ENCODE measurements at regions of chr21 and their contacts with region 1.

Region 1: GRCh38 chr21:42652527-42653230 is 742 bp upstream of the PDE9A start:
- DNase-seq: peak; percentile 58
- ATAC-seq: peak; percentile 91
- H3K4me3 ChIP-seq: peak overlapping the region in 1 of 3 experiments; percentile 38; a peak in 2 of 6 replicates
- H3K27ac ChIP-seq: no peak overlapping the region
- H3K4me1 ChIP-seq: peaks cover 43% of the 10 kb centered on the region
- H3K27me3 ChIP-seq: peaks cover 4 to 29% of the 10 kb centered on the region in 2 experiments; a peak in 4 of 5 replicates
- CTCF ChIP-seq: peak; percentile 86
- EP300 ChIP-seq: no peak
- POLR2A ChIP-seq: no peak
- RAD21 ChIP-seq: peak; percentile 84

Region 2: GRCh38 chr21:42695697-42696380 is 43.2 kb after region 1 on chr21:
- CTCF ChIA-PET with region 1: no interaction called
- POLR2A ChIA-PET with region 1: no interaction called
- in situ Hi-C with region 1: no loop called
- intact Hi-C with region 1: no loop called
- DNase-seq: no peak
- ATAC-seq: no peak
- H3K4me3 ChIP-seq: no peak overlapping the region
- H3K27ac ChIP-seq: no peak overlapping the region
- H3K4me1 ChIP-seq: no peaks in the 10 kb centered on the region
- H3K27me3 ChIP-seq: no peaks in the 10 kb centered on the region
- CTCF ChIP-seq: no peak
- EP300 ChIP-seq: no peak
- POLR2A ChIP-seq: no peak
- RAD21 ChIP-seq: no peak

Region 3: GRCh38 chr21:42705746-42706374 is 53.2 kb after region 1 on chr21:
- CTCF ChIA-PET with region 1: no interaction called
- POLR2A ChIA-PET with region 1: no interaction called
- in situ Hi-C with region 1: no loop called
- intact Hi-C with region 1: no loop called
- DNase-seq: no peak
- ATAC-seq: no peak
- H3K4me3 ChIP-seq: no peak overlapping the region
- H3K27ac ChIP-seq: no peak overlapping the region
- H3K4me1 ChIP-seq: peaks cover 26% of the 10 kb centered on the region
- H3K27me3 ChIP-seq: no peaks in the 10 kb centered on the region
- CTCF ChIP-seq: no peak
- EP300 ChIP-seq: no peak
- POLR2A ChIP-seq: no peak
- RAD21 ChIP-seq: no peak

Region 4: GRCh38 chr21:42737951-42738590 is 85.4 kb after region 1 on chr21:
- CTCF ChIA-PET with region 1: no interaction called
- POLR2A ChIA-PET with region 1: interaction called, 5 read pairs
- in situ Hi-C with region 1: no loop called
- intact Hi-C with region 1: loop called (anchors 1 kb)
- DNase-seq: peak; percentile 89
- ATAC-seq: peak; percentile 88
- H3K4me3 ChIP-seq: peak overlapping the region in 1 of 3 experiments; percentile 58; a peak in 3 of 6 replicates
- H3K27ac ChIP-seq: peak overlapping the region; percentile 96
- H3K4me1 ChIP-seq: peaks cover 83% of the 10 kb centered on the region
- H3K27me3 ChIP-seq: no peaks in the 10 kb centered on the region
- CTCF ChIP-seq: no peak
- EP300 ChIP-seq: peak in 1 of 2 experiments; percentile 65; a peak in 2 of 4 replicates
- POLR2A ChIP-seq: peak; percentile 39 to 46; a peak in 2 of 4 replicates
- RAD21 ChIP-seq: no peak; the same call in 1 of the 2 replicates

Region 5: GRCh38 chr21:42760951-42761680 is 108.4 kb after region 1 on chr21:
- CTCF ChIA-PET with region 1: no interaction called
- POLR2A ChIA-PET with region 1: interaction called, 4 read pairs
- in situ Hi-C with region 1: loop called (anchors 25 kb)
- intact Hi-C with region 1: no loop called
- DNase-seq: peak; percentile 66
- ATAC-seq: peak; percentile 77
- H3K4me3 ChIP-seq: peak overlapping the region in 1 of 3 experiments; percentile 17; a peak in 1 of 6 replicates
- H3K27ac ChIP-seq: peak overlapping the region; percentile 81
- H3K4me1 ChIP-seq: peaks cover 43% of the 10 kb centered on the region
- H3K27me3 ChIP-seq: no peaks in the 10 kb centered on the region
- CTCF ChIP-seq: 0 out of 2 replicates have a peak, but pooled peaks have one; percentile 16
- EP300 ChIP-seq: peak in 1 of 2 experiments; percentile 37; a peak in 1 of 4 replicates
- POLR2A ChIP-seq: no peak; a peak in 1 of 4 replicates
- RAD21 ChIP-seq: no peak

Region 6: GRCh38 chr21:42781150-42781970 is 128.7 kb after region 1 on chr21:
- CTCF ChIA-PET with region 1: no interaction called
- POLR2A ChIA-PET with region 1: no interaction called
- in situ Hi-C with region 1: no loop called
- intact Hi-C with region 1: loop called (anchors 5 kb)
- DNase-seq: peak; percentile 32
- ATAC-seq: peak; percentile 56
- H3K4me3 ChIP-seq: peak overlapping the region; percentile 48 to 72 (median 57)
- H3K27ac ChIP-seq: peak overlapping the region; percentile 52
- H3K4me1 ChIP-seq: peaks cover 60% of the 10 kb centered on the region
- H3K27me3 ChIP-seq: peaks cover 0 to 9% of the 10 kb centered on the region in 2 experiments; a peak in 1 of 5 replicates
- CTCF ChIP-seq: peak; percentile 60
- EP300 ChIP-seq: no peak
- POLR2A ChIP-seq: no peak
- RAD21 ChIP-seq: no peak

Region 7: DNA sequence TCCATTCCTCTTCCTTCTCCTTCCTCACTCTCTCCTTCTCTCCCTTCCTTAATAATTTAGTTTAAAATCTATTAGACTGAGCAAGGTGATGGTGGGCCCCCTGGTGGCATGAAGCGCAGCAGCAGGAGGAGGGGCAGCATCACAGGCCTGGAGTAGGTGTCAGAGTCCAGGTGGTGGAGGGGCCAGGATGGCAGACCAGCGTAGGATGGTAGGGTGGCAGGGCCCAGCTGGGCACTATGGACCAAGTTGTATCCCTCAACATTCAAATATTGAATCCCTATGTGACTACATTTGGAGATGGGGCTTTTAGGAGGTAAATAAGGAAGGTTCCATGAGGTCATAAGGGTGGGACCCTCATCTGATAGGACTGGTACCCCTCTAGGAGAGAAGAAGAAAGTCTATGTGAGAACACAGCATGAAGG is 165.7 kb after region 1 on chr21:
- CTCF ChIA-PET with region 1: interaction called, 11 read pairs
- POLR2A ChIA-PET with region 1: no interaction called
- in situ Hi-C with region 1: no loop called
- intact Hi-C with region 1: loop called (anchors 1 kb)
- DNase-seq: peak; percentile 52
- ATAC-seq: peak; percentile 88
- H3K4me3 ChIP-seq: no peak overlapping the region
- H3K27ac ChIP-seq: no peak overlapping the region
- H3K4me1 ChIP-seq: peaks cover 24% of the 10 kb centered on the region
- H3K27me3 ChIP-seq: no peaks in the 10 kb centered on the region
- CTCF ChIP-seq: peak; percentile 90
- EP300 ChIP-seq: no peak
- POLR2A ChIP-seq: no peak
- RAD21 ChIP-seq: peak; percentile 78

Region 8: DNA sequence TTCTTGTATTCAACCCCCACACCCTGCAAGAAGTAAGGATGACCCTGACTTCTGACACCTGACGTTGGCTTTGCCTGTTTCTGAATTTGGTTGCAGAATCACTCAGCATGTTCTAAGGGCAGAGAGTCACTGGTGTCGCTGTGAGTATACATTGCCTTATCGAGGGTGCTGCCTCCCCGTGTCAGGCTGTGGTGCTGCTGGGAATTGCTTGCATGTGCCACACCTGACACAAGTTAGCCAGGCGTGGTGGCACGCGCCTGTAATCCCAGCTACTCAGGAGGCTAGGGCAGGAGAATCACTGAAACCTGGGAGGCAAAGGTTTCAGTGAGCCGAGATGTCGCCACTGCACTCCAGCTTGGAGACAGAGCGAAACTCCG is 180.7 kb after region 1 on chr21:
- CTCF ChIA-PET with region 1: no interaction called
- POLR2A ChIA-PET with region 1: no interaction called
- in situ Hi-C with region 1: loop called (anchors 10 kb)
- intact Hi-C with region 1: no loop called
- DNase-seq: peak; percentile 25
- ATAC-seq: peak; percentile 50
- H3K4me3 ChIP-seq: no peak overlapping the region
- H3K27ac ChIP-seq: no peak overlapping the region
- H3K4me1 ChIP-seq: peaks cover 17% of the 10 kb centered on the region
- H3K27me3 ChIP-seq: no peaks in the 10 kb centered on the region
- CTCF ChIP-seq: peak; percentile 45
- EP300 ChIP-seq: no peak
- POLR2A ChIP-seq: no peak
- RAD21 ChIP-seq: 0 out of 2 replicates have a peak, but pooled peaks have one; percentile 26

Measured in HepG2 (cell line).